ENCODE measurements at regions of chr17 and their contacts with region 1.

Region 1: DNA sequence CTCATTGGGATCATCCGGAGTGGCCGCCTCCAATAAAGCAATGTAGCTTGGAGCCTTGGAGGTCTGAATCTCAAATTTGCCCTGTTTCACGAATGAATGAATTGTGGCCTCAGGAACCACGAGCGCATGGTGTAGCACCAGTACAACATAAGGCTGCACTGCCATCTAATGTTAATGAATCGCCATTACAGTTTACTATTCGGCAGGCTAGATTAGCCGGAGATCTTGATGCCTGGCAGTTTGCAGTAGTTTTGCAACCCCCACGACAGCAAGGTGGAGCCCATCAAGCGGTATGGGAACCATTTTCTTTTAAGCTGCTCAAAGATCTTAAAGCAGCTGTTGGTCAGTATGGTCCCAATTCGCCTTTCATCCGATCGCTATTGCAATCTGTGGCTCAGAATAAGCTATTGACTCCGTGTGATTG is 18.8 kb downstream of the ALOX15B start:
- DNase-seq: no peak
- H3K4me3 ChIP-seq: no peak overlapping the region
- CTCF ChIP-seq: peak; percentile 68

Region 2: GRCh38 chr17:7296189-7296902 is 761.4 kb before region 1 on chr17:
- CTCF ChIA-PET with region 1: no interaction called
- POLR2A ChIA-PET with region 1: no interaction called
- DNase-seq: no peak
- H3K4me3 ChIP-seq: peak overlapping the region; percentile 20
- CTCF ChIP-seq: peak; percentile 89

Region 3: DNA sequence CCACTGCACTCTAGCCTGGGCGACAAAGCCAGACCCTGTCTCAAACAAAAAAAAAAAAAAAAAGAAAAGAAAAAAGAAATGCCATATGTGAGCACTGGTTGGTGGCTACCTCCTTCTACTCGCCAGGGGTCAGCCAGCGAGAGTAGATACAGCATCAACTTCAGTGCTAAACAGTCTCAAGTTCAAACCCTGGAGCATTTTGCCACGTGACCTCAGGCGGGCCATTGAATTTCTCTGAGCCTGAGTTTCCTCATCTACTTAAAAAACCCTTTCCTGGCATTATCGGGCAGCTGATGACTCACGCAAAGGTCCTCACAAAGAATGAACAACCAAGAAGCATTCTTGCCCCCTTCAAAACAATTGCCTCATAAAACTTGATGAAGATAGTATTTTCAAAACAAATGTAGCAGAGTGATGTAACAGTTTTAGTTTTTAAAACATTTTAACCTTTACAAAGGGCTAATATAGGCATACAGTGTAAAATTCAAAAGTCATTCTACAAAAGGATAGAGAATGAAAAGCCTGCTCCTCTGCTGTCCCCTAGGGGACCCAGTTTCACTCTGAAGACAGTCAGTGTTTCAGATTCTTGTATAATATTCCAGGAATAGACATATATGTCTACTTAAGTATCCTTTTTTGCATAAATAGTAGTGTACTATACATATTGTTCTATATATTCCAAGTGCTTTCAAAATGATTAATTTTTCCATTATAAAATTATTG is 311.8 kb before region 1 on chr17:
- CTCF ChIA-PET with region 1: interaction called, 21 read pairs
- POLR2A ChIA-PET with region 1: no interaction called
- DNase-seq: peak; percentile 23
- H3K4me3 ChIP-seq: no peak overlapping the region
- CTCF ChIP-seq: no peak

Region 4: DNA sequence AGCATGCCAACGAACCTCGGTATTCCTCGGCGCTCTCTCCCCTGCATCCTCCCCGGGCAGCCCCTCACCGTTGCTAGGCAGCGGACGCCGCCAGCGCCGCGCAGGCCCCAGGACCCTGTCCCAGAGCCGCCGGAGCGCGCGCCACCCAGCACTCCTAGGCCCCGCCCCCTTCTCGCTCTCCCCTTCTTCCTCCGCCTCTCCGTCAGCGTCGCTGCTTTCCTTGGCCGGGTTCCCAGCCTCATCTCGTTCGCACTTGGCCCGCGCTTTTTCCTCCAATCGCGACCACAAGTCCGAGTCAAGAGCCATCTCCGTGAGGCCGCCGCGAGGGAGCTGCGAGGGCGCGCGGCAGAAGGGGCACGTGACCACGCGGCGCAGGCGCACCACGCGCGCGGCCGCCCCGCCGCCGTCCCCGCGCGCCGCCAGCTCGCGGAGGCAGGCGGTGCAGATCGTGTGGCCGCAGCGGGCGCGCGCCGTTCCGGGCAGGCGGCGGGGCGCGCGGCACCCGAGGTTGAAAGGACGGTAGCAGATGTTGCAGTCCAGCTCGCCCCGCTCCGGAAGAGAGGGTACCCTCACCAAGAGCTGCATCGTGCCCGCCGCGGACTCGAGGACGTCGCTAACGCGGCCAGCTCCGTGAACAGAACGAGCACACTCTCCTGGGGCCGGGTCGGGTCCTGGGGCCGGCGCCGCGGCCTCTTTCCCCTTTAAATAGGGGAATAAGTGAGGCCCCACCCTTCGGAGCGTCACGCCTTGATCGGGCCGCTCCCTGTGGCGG is 141.9 kb before region 1 on chr17 and contains the start of gene RNF227:
- CTCF ChIA-PET with region 1: interaction called, 51 read pairs
- POLR2A ChIA-PET with region 1: no interaction called
- DNase-seq: peak; percentile 81
- H3K4me3 ChIP-seq: peak within 1 kb of the TSS; percentile 70
- CTCF ChIP-seq: no peak

Region 5: DNA sequence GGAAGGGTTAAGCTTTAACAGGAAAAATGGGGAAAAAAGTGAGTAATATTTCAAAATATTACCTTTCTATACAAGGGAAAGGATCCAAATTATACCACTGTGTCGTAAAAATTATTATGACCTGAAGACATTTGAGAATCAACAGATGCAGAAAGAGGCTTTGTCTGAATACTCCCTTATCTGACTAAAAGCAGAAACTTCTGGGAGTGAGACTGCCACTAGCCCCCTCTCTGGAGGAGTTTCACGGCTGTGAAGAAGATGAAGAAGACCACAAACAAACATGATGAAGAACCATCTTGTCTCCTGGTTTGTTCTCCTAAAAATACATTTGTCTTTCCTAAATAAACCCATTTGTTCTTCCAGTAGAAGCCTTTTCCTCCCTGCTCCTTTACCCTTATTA is 96.3 kb before region 1 on chr17:
- CTCF ChIA-PET with region 1: no interaction called
- POLR2A ChIA-PET with region 1: no interaction called
- DNase-seq: no peak
- H3K4me3 ChIP-seq: no peak overlapping the region
- CTCF ChIP-seq: no peak

Region 6: DNA sequence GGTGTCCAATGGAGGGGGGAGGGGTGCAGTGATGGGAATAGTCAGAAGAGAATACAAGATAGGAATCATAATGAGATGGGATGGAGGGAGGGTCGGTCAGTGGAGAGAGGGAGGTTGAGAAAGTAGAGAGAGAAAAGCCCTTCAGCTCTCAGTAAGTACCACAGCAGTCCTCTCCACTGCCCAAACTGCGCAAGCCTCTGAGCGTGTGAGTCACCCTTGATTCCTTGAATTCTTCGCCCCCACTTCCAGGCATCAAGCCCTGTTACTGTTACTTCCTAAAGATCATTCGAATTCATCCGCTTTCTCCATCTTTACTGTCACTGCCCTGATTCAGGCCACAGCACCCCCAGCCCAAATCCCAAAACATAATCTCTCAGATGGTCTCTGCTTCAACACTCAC is 52.8 kb before region 1 on chr17:
- CTCF ChIA-PET with region 1: interaction called, 10 read pairs
- POLR2A ChIA-PET with region 1: no interaction called
- DNase-seq: no peak
- H3K4me3 ChIP-seq: no peak overlapping the region
- CTCF ChIP-seq: no peak

Region 7: DNA sequence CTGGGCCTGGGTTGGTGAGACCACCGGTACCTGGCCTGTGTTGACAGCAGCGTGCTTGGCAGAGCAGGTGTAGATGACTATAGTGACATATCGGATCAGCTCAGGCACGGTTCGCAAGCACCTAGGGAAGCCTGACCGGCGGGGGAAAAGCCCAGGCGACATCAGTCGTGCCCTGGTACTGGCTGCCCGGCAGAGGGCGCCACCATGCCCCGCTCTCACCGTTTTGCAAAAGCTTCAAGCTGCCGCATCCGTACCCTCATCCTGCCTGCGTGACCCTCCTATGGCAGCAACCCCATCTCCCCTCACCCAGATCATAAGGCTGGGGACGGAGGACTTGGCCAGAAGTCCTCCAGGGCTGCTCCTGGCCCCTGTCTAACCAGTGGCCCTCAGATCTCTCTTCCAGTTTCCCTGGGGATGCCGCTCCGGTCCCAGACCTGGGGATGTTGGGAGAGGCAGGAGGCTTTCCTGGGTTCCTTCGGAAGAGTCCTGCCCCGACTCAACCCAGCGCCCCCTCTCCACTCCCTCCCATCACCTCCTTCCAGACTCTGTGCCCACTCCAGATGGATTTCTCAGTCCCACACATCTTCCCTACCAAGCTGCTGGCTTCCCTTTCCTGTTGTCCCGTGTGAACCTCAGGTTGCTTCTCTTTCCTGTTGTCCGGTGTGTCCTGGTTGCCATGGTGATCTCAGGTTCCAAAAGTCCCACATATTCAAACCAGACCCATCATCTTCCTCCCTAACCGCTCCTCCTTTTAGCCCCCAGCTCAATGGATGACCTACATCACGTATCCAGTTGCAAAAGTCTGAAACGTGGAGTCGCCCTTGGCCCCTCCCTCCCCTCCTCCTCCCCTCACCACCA is 16.2 kb after region 1 on chr17:
- CTCF ChIA-PET with region 1: interaction called, 233 read pairs
- POLR2A ChIA-PET with region 1: no interaction called
- DNase-seq: no peak
- H3K4me3 ChIP-seq: no peak overlapping the region
- CTCF ChIP-seq: peak; percentile 87

Region 8: DNA sequence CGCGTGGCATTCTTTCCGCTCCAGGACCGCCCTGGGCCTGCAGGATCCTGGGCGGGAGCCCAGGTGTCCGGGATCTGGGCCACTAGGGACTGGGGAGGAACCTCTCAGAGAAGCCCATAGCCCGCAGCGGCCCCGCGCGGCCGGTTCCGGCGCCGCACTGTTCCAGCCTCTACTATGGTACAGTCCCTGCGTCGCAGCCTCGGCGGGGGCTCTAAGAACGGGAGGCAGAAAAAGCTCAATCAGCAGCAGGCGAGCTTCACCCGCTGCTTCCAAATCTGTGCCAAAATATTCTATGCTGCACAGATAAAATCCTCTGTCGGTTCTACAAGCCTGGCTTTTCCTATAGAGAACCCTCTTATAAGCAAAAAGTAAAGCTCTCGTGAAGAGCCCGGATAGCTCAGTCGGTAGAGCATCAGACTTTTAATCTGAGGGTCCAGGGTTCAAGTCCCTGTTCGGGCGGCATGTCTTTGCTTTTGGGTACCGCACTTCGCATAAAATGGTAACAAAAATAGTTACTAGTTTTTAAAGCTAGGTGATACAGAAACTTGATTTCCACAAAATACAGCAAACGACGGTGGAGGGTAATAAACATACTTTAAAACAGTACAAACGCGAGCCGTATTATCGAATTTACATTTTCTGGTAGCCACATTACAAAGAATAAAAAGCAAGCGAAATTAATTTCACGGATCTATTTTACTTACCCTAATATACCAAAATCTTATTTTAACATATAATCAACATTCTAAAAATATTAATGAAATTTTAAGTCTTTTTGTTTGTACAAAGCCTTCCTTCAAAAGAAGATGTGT is 61.3 kb after region 1 on chr17:
- CTCF ChIA-PET with region 1: interaction called, 130 read pairs
- POLR2A ChIA-PET with region 1: no interaction called
- DNase-seq: no peak
- H3K4me3 ChIP-seq: peak overlapping the region; percentile 73
- CTCF ChIP-seq: peak; percentile 93

Region 9: GRCh38 chr17:8785547-8786413 is 728.1 kb after region 1 on chr17:
- CTCF ChIA-PET with region 1: interaction called, 20 read pairs
- POLR2A ChIA-PET with region 1: no interaction called
- DNase-seq: no peak
- H3K4me3 ChIP-seq: no peak overlapping the region
- CTCF ChIP-seq: peak; percentile 88

Measured in AG04449 (cell line).